CD8-positive, alpha-beta T cell (primary cell): ENCODE measurements at regions of chr5 and their contacts with region 1.

Region 1: DNA sequence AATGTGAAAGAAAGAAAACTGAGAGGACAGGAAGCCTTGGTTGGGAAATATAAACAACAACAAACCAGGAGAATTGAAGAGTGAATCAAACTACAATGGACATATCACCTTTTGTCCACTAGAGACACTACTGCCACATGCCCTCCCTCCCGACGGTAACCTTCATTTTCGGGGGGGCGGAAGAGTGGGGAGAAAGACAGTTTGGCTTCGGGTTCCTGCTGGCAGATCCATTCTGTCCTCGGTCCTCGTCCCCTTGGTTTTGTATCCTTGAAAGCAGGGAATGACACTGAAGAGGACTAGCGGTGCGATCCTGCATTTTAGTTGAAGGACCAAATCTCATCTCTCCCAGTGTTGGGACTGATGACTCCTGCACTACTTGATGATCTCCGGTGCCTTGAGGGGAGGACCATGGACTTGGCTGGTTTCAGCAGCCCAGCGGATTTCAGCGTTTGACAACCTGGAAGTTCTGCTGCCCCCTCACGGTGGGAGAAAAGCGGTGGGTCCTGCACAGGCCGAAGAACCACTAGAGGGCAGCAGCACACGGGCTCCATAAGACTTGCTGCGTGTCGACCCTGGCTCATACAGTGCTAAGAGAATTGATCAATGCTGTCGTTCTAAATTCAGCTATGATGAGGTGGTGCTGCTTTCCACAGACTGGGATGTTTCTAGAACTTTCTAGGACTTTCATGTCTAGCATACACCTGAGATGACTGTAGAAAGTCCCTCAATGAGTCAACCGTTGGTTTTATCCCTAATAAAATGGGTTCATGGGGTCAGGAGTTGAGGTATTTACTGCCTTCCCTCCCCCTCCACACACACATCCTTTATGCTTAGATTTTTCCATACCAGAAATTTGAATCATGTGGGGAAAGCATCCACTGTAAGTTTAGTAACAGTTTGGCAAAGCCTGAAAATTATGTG is 15.1 kb upstream of the ZNF131 start:
- DNase-seq: peak; percentile 81 to 96 (median 91)
- ATAC-seq: peak; percentile 94
- H3K4me3 ChIP-seq: peak overlapping the region; percentile 55 to 56
- H3K4me3 Mint-ChIP-seq: peak overlapping the region; percentile 84
- H3K27ac ChIP-seq: peak overlapping the region in 1 of 2 experiments; percentile 58
- H3K27ac Mint-ChIP-seq: peak overlapping the region; percentile 84
- H3K4me1 ChIP-seq: peaks cover 27% of the 10 kb centered on the region
- H3K4me1 Mint-ChIP-seq: peaks cover 35% of the 10 kb centered on the region
- H3K27me3 ChIP-seq: no peaks in the 10 kb centered on the region
- H3K27me3 Mint-ChIP-seq: no peaks in the 10 kb centered on the region
- CTCF ChIP-seq: peak; percentile 100

Region 2: DNA sequence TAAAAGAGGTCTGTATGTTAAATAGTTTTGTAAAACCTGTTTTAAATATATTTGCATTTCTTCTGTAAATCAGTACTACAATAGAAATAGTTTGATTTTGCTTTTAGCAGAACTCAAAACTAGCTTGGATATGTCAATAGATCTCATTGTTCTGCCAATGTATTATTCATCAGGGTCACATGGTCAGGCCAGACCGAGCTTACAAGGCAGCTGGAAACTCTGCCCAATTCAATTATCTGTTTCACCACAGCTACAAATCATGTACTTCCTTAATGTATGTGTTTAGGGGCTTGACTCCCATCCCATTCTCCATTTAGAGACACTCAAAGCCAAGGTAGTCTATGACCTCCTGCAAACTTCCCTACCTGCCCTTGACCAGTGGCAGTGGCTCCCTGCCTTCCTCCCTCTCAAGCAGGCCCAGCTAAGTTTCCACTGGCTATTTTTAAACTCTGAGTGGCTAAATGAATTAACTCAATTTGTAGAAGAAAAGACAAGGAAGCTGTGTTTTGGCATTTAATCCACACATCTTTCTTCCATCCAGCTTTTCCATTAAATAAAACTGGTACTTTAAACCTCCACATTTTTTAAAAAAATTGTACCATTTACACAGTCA is 247.5 kb before region 1 on chr5:
- CTCF ChIA-PET with region 1: no interaction called
- POLR2A ChIA-PET with region 1: no interaction called
- intact Hi-C with region 1: no loop called
- DNase-seq: no peak
- ATAC-seq: no peak
- H3K4me3 ChIP-seq: no peak overlapping the region
- H3K4me3 Mint-ChIP-seq: no peak overlapping the region
- H3K27ac ChIP-seq: no peak overlapping the region
- H3K27ac Mint-ChIP-seq: no peak overlapping the region
- H3K4me1 ChIP-seq: no peaks in the 10 kb centered on the region
- H3K4me1 Mint-ChIP-seq: no peaks in the 10 kb centered on the region
- H3K27me3 ChIP-seq: no peaks in the 10 kb centered on the region
- H3K27me3 Mint-ChIP-seq: peaks cover 15% of the 10 kb centered on the region
- CTCF ChIP-seq: no peak

Region 3: DNA sequence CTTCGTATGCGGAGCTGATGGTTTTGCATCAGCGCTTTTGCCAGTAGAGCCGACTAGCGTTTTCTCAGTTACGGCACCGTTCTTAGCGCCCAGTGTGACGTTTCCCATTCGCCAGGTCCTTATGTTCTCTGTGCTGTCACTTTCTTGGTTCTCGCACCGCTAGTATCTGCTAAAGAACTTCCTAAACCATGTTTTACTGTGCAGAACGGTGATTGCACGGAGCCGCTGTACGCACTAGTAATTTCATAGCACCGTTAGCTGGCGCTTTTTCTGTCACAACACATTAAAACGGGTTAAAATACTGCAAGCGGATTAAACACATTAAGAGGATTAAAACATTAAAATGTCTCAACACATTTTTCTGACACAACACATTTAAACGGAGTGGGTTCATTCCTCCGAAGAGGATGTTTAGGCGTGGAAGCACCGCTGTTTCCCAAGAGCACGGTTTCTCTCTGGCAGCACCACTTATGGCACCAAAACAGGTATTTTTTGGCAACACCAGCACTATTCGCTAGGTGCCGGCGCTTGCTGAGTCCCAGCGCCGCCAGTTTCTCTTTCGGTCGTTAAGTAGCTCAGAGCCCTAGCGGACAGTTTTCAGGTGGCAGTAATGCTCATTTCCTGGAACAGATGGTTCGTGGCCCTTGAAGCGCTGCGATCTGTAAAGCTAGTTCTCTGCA is 85.9 kb before region 1 on chr5:
- CTCF ChIA-PET with region 1: interaction called, 12 read pairs
- POLR2A ChIA-PET with region 1: interaction called, 10 read pairs
- intact Hi-C with region 1: loop called in 1 of 2 experiments (anchors 1 kb)
- DNase-seq: peak; percentile 69 to 96 (median 84)
- ATAC-seq: peak; percentile 66
- H3K4me3 ChIP-seq: peak overlapping the region; percentile 70 to 73
- H3K4me3 Mint-ChIP-seq: peak overlapping the region; percentile 98
- H3K27ac ChIP-seq: peak overlapping the region; percentile 97 to 98
- H3K27ac Mint-ChIP-seq: peak overlapping the region; percentile 100
- H3K4me1 ChIP-seq: peaks cover 40% of the 10 kb centered on the region
- H3K4me1 Mint-ChIP-seq: peaks cover 43% of the 10 kb centered on the region
- H3K27me3 ChIP-seq: no peaks in the 10 kb centered on the region
- H3K27me3 Mint-ChIP-seq: no peaks in the 10 kb centered on the region
- CTCF ChIP-seq: peak; percentile 71

Region 4: GRCh38 chr5:43078986-43079355 is 26.7 kb before region 1 on chr5:
- CTCF ChIA-PET with region 1: interaction called, 12 read pairs
- POLR2A ChIA-PET with region 1: no interaction called
- intact Hi-C with region 1: no loop called
- DNase-seq: no peak
- ATAC-seq: no peak
- H3K4me3 ChIP-seq: no peak overlapping the region
- H3K4me3 Mint-ChIP-seq: no peak overlapping the region
- H3K27ac ChIP-seq: no peak overlapping the region
- H3K27ac Mint-ChIP-seq: no peak overlapping the region
- H3K4me1 ChIP-seq: peaks cover 10% of the 10 kb centered on the region
- H3K4me1 Mint-ChIP-seq: peaks cover 24% of the 10 kb centered on the region
- H3K27me3 ChIP-seq: no peaks in the 10 kb centered on the region
- H3K27me3 Mint-ChIP-seq: no peaks in the 10 kb centered on the region
- CTCF ChIP-seq: no peak

Region 5: GRCh38 chr5:43305948-43306565 is 200.4 kb after region 1 on chr5:
- CTCF ChIA-PET with region 1: interaction called, 4 read pairs
- POLR2A ChIA-PET with region 1: no interaction called
- intact Hi-C with region 1: loop called (anchors 1 to 2 kb)
- DNase-seq: peak in 2 of 9 experiments; percentile 61 to 72
- ATAC-seq: peak; percentile 83
- H3K4me3 ChIP-seq: no peak overlapping the region
- H3K4me3 Mint-ChIP-seq: no peak overlapping the region
- H3K27ac ChIP-seq: peak overlapping the region in 1 of 2 experiments; percentile 12
- H3K27ac Mint-ChIP-seq: peak overlapping the region; percentile 5
- H3K4me1 ChIP-seq: peaks cover 4% of the 10 kb centered on the region
- H3K4me1 Mint-ChIP-seq: peaks cover 51% of the 10 kb centered on the region
- H3K27me3 ChIP-seq: no peaks in the 10 kb centered on the region
- H3K27me3 Mint-ChIP-seq: no peaks in the 10 kb centered on the region
- CTCF ChIP-seq: peak; percentile 75

Region 6: GRCh38 chr5:43320846-43321245 is 215.2 kb after region 1 on chr5:
- CTCF ChIA-PET with region 1: no interaction called
- POLR2A ChIA-PET with region 1: no interaction called
- intact Hi-C with region 1: no loop called
- DNase-seq: no peak
- ATAC-seq: no peak
- H3K4me3 ChIP-seq: no peak overlapping the region
- H3K4me3 Mint-ChIP-seq: no peak overlapping the region
- H3K27ac ChIP-seq: no peak overlapping the region
- H3K27ac Mint-ChIP-seq: no peak overlapping the region
- H3K4me1 ChIP-seq: no peaks in the 10 kb centered on the region
- H3K4me1 Mint-ChIP-seq: no peaks in the 10 kb centered on the region
- H3K27me3 ChIP-seq: no peaks in the 10 kb centered on the region
- H3K27me3 Mint-ChIP-seq: no peaks in the 10 kb centered on the region
- CTCF ChIP-seq: no peak

Region 7: GRCh38 chr5:44246986-44247385 is 1141.4 kb after region 1 on chr5:
- CTCF ChIA-PET with region 1: no interaction called
- POLR2A ChIA-PET with region 1: no interaction called
- intact Hi-C with region 1: no loop called
- DNase-seq: no peak
- ATAC-seq: no peak
- H3K4me3 ChIP-seq: no peak overlapping the region
- H3K4me3 Mint-ChIP-seq: no peak overlapping the region
- H3K27ac ChIP-seq: no peak overlapping the region
- H3K27ac Mint-ChIP-seq: no peak overlapping the region
- H3K4me1 ChIP-seq: no peaks in the 10 kb centered on the region
- H3K4me1 Mint-ChIP-seq: no peaks in the 10 kb centered on the region
- H3K27me3 ChIP-seq: no peaks in the 10 kb centered on the region
- H3K27me3 Mint-ChIP-seq: no peaks in the 10 kb centered on the region
- CTCF ChIP-seq: no peak

Region 8: DNA sequence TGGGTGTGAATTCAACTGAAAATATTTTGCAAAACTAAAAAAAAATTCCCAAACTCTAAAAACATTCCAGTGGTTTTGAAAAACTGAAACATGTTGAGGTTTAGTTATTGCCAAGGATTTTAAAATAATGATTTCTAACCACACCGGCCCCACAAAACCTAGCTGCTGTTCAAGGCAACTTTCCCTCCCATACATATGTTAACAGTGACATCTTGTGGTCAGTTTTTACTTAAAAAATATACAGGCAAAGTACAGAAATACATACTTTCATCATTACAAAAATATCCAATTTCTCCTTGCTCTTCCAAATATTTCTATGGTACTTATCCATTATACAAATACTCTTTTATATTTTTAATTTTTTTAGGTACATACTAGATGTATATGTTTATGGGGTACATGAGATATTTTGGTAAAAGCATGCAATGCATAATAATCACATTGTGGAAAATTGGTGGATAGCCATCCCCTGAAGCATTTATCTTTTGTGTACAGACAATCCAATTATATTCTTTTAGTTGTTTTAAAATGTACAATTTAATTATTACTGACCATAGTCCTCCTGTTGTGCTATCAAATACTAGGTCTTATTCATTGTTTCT is 1668.8 kb after region 1 on chr5:
- CTCF ChIA-PET with region 1: no interaction called
- POLR2A ChIA-PET with region 1: no interaction called
- intact Hi-C with region 1: loop called in 1 of 2 experiments (anchors 10 kb)
- DNase-seq: peak in 2 of 9 experiments; percentile 27 to 46
- ATAC-seq: no peak
- H3K4me3 ChIP-seq: no peak overlapping the region
- H3K4me3 Mint-ChIP-seq: no peak overlapping the region
- H3K27ac ChIP-seq: no peak overlapping the region
- H3K27ac Mint-ChIP-seq: no peak overlapping the region
- H3K4me1 ChIP-seq: no peaks in the 10 kb centered on the region
- H3K4me1 Mint-ChIP-seq: no peaks in the 10 kb centered on the region
- H3K27me3 ChIP-seq: no peaks in the 10 kb centered on the region
- H3K27me3 Mint-ChIP-seq: peaks cover 7% of the 10 kb centered on the region
- CTCF ChIP-seq: peak; percentile 64